ENCODE measurements at regions of chr3 and their contacts with region 1.

Region 1: GRCh38 chr3:11601446-11602238 is 42.1 kb downstream of the VGLL4 start:
- DNase-seq: no peak
- ATAC-seq: peak; percentile 12; the same call in 1 of the 2 replicates
- H3K4me3 ChIP-seq: peak overlapping the region; percentile 5 to 41; a peak in 3 of 4 replicates
- H3K27ac ChIP-seq: peak overlapping the region; percentile 97
- H3K4me1 ChIP-seq: peaks cover 61% of the 10 kb centered on the region
- H3K27me3 ChIP-seq: no peaks in the 10 kb centered on the region
- CTCF ChIP-seq: no peak

Region 2: DNA sequence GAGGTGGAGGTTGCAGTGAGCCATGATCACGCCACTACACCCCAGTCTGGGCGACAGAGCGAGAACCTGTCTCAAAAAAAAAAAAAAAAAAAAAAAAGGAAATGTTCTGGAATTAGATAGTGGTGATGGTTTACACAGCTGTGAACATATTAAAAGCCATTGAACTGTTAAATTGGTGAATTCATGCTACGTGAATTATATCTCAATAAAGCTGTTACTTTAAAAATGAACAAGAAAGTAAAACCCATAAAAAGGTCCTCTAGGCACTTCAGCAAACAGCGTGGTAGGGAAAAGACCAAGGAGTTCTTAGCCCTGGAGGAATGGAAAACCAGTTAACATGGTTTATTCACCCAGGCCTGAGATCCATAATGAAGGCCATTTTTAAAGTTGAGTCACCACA is 149.3 kb before region 1 on chr3:
- CTCF ChIA-PET with region 1: no interaction called
- POLR2A ChIA-PET with region 1: interaction called, 15 read pairs
- in situ Hi-C with region 1: no loop called
- intact Hi-C with region 1: no loop called
- DNase-seq: no peak
- ATAC-seq: no peak
- H3K4me3 ChIP-seq: no peak overlapping the region
- H3K27ac ChIP-seq: no peak overlapping the region
- H3K4me1 ChIP-seq: no peaks in the 10 kb centered on the region; the same call in 1 of the 2 replicates
- H3K27me3 ChIP-seq: no peaks in the 10 kb centered on the region
- CTCF ChIP-seq: no peak

Region 3: GRCh38 chr3:11556851-11557644 is 44.6 kb before region 1 on chr3:
- CTCF ChIA-PET with region 1: no interaction called
- POLR2A ChIA-PET with region 1: interaction called, 3 read pairs
- in situ Hi-C with region 1: no loop called
- intact Hi-C with region 1: loop called (anchors 10 kb)
- DNase-seq: no peak
- ATAC-seq: no peak
- H3K4me3 ChIP-seq: no peak overlapping the region
- H3K27ac ChIP-seq: peak overlapping the region; percentile 96
- H3K4me1 ChIP-seq: peaks cover 99% of the 10 kb centered on the region
- H3K27me3 ChIP-seq: no peaks in the 10 kb centered on the region
- CTCF ChIP-seq: no peak

Region 4: DNA sequence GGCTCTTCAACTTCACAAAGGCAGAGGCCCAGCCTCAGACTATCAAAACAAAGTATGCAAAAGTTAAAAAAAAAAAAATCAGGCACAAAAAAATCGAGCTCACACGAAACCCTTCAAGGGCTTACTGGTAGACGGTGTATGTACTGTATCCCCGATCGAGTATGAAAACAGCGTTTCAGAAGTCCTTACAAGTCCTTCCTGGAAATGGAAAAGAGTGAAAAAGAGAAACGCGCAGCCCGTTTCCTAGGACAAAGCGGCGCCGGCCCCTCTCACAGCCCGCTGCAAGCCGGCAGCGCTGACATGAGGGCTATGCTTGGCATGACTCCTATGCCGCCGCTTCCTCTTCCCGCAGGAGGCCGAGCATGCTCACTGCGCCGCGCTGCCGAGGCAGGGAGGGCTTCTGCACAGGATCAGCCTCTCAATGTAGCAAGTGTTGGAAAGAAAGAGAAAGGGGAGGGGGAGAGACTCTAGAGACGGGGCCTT is 42.0 kb after region 1 on chr3 and contains the start of gene VGLL4:
- CTCF ChIA-PET with region 1: interaction called, 7 read pairs
- POLR2A ChIA-PET with region 1: interaction called, 3 read pairs
- in situ Hi-C with region 1: no loop called
- intact Hi-C with region 1: loop called (anchors 2 kb)
- DNase-seq: no peak
- ATAC-seq: peak; percentile 85
- H3K4me3 ChIP-seq: peak within 1 kb of the TSS; percentile 84 to 86
- H3K27ac ChIP-seq: peak within 1 kb of the TSS; percentile 99
- H3K4me1 ChIP-seq: peaks cover 12% of the 10 kb centered on the region
- H3K27me3 ChIP-seq: no peaks in the 10 kb centered on the region
- CTCF ChIP-seq: peak; percentile 17; the same call in 1 of the 2 replicates
- total RNA-seq, gene VGLL4: 66.0 TPM

Region 5: GRCh38 chr3:12073106-12073505 is 471.5 kb after region 1 on chr3:
- CTCF ChIA-PET with region 1: no interaction called
- POLR2A ChIA-PET with region 1: no interaction called
- in situ Hi-C with region 1: no loop called
- intact Hi-C with region 1: no loop called
- DNase-seq: no peak
- ATAC-seq: no peak
- H3K4me3 ChIP-seq: no peak overlapping the region
- H3K27ac ChIP-seq: no peak overlapping the region
- H3K4me1 ChIP-seq: no peaks in the 10 kb centered on the region
- H3K27me3 ChIP-seq: no peaks in the 10 kb centered on the region
- CTCF ChIP-seq: no peak

Measured in Panc1 (cell line).